ENCODE measurements at regions of chrX and their contacts with region 1.

Region 1: GRCh38 chrX:37976153-37976552 is 30.2 kb upstream of the SYTL5 start:
- DNase-seq: no peak
- H3K4me3 ChIP-seq: no peak overlapping the region
- H3K4me3 Mint-ChIP-seq: no peak overlapping the region
- H3K27ac Mint-ChIP-seq: no peak overlapping the region
- H3K4me1 ChIP-seq: peaks cover 11% of the 10 kb centered on the region; the same call in 1 of the 2 replicates
- H3K4me1 Mint-ChIP-seq: peaks cover 18% of the 10 kb centered on the region
- H3K27me3 ChIP-seq: no peaks in the 10 kb centered on the region
- H3K27me3 Mint-ChIP-seq: no peaks in the 10 kb centered on the region
- CTCF ChIP-seq: no peak

Region 2: GRCh38 chrX:37677765-37678164 is 298.4 kb before region 1 on chrX:
- CTCF ChIA-PET with region 1: no interaction called
- POLR2A ChIA-PET with region 1: no interaction called
- intact Hi-C with region 1: no loop called
- DNase-seq: no peak
- H3K4me3 ChIP-seq: no peak overlapping the region
- H3K4me3 Mint-ChIP-seq: no peak overlapping the region
- H3K27ac Mint-ChIP-seq: no peak overlapping the region
- H3K4me1 ChIP-seq: no peaks in the 10 kb centered on the region
- H3K4me1 Mint-ChIP-seq: peaks cover 12% of the 10 kb centered on the region
- H3K27me3 ChIP-seq: no peaks in the 10 kb centered on the region
- H3K27me3 Mint-ChIP-seq: no peaks in the 10 kb centered on the region
- CTCF ChIP-seq: no peak

Region 3: DNA sequence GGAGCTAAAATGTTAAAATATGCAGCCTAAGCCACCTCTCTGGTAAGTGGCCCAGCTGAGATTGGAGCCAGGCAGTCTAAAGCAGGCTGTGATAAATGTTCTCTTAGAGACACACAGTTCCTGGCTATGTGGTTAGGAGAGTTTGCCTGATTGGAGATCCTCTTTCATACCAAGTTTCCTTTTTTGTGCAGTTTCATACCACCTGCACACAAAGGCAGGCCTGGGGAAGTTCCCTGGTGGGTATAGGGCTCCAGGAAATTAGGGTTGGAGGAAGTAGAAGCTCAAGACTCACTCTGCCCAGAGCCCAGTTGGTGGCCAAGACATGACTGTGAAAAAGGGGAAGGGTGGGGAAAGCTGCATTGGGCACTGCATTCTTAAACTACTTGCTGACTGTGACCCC is 179.3 kb before region 1 on chrX:
- CTCF ChIA-PET with region 1: no interaction called
- POLR2A ChIA-PET with region 1: no interaction called
- intact Hi-C with region 1: no loop called
- DNase-seq: no peak
- H3K4me3 ChIP-seq: no peak overlapping the region
- H3K4me3 Mint-ChIP-seq: no peak overlapping the region
- H3K27ac Mint-ChIP-seq: no peak overlapping the region
- H3K4me1 ChIP-seq: no peaks in the 10 kb centered on the region
- H3K4me1 Mint-ChIP-seq: no peaks in the 10 kb centered on the region
- H3K27me3 ChIP-seq: no peaks in the 10 kb centered on the region
- H3K27me3 Mint-ChIP-seq: no peaks in the 10 kb centered on the region
- CTCF ChIP-seq: no peak

Region 4: DNA sequence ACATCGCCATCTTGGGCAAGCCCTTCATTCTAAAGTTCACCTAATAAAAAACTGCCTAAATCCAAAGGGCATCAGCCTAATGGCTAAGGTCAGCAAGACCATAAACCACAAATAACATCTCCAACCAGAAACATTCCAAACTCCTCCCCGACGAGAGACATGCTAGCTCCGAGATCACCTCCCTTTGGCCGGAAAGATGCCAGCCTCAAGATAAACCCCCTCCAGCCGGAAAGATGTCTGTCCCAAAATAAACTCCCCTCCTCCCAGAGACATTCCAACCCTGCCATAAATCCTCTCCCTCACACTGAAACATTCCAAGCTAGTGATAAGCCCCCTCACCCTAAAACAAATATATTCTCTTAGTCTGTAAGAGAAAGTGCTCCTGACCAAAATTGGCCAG is 115.4 kb before region 1 on chrX:
- CTCF ChIA-PET with region 1: no interaction called
- POLR2A ChIA-PET with region 1: no interaction called
- intact Hi-C with region 1: no loop called
- DNase-seq: peak; percentile 69 to 86
- H3K4me3 ChIP-seq: no peak overlapping the region
- H3K4me3 Mint-ChIP-seq: peak overlapping the region; percentile 44
- H3K27ac Mint-ChIP-seq: peak overlapping the region; percentile 54
- H3K4me1 ChIP-seq: peaks cover 46% of the 10 kb centered on the region
- H3K4me1 Mint-ChIP-seq: peaks cover 22% of the 10 kb centered on the region
- H3K27me3 ChIP-seq: no peaks in the 10 kb centered on the region
- H3K27me3 Mint-ChIP-seq: no peaks in the 10 kb centered on the region
- CTCF ChIP-seq: no peak

Region 5: DNA sequence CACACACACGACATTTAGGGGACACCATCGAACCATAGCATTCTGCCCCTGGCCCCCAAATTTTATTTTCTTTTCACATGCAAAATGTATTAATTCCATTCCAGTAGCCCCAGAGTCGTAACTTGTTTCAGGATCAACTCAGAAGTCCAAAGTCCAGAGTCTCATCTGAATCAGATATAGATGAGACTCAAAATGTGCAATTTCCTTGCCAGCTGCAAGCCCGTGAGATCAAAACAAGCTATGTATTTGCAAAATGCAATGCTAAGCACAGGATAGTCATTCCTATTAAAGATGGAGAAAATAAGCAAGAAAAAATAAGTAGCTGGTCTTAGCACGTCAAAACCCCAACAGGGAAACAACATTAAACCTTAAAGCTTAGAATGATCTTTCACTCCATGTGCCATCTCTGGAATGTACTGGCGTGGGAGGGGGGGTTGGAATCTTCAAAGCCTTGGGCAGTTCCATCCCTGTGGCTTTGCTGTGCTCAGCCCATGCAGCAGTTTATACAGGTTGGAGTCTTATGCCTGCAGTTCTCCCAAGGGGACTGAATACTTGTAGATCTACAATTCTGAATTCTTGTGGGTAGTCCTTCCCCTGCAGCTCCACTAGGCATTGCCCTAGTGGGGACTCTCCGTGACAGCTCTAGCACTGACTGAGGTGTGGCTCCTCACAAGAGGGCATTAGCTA is 17.5 kb before region 1 on chrX:
- CTCF ChIA-PET with region 1: no interaction called
- POLR2A ChIA-PET with region 1: no interaction called
- intact Hi-C with region 1: loop called (anchors 2 kb)
- DNase-seq: peak; percentile 46 to 60
- H3K4me3 ChIP-seq: no peak overlapping the region
- H3K4me3 Mint-ChIP-seq: peak overlapping the region; percentile 52
- H3K27ac Mint-ChIP-seq: peak overlapping the region; percentile 66
- H3K4me1 ChIP-seq: peaks cover 21% of the 10 kb centered on the region
- H3K4me1 Mint-ChIP-seq: peaks cover 22% of the 10 kb centered on the region
- H3K27me3 ChIP-seq: no peaks in the 10 kb centered on the region
- H3K27me3 Mint-ChIP-seq: no peaks in the 10 kb centered on the region
- CTCF ChIP-seq: no peak

Region 6: GRCh38 chrX:38006291-38006690 is 30.1 kb after region 1 on chrX and contains the start of gene SYTL5:
- CTCF ChIA-PET with region 1: no interaction called
- POLR2A ChIA-PET with region 1: no interaction called
- intact Hi-C with region 1: loop called (anchors 5 kb)
- DNase-seq: peak in 1 of 2 experiments; percentile 53
- H3K4me3 ChIP-seq: peak within 1 kb of the TSS; percentile 25
- H3K4me3 Mint-ChIP-seq: peak within 1 kb of the TSS; percentile 74
- H3K27ac Mint-ChIP-seq: peak within 1 kb of the TSS; percentile 90
- H3K4me1 ChIP-seq: peaks cover 33% of the 10 kb centered on the region
- H3K4me1 Mint-ChIP-seq: peaks cover 19% of the 10 kb centered on the region
- H3K27me3 ChIP-seq: no peaks in the 10 kb centered on the region
- H3K27me3 Mint-ChIP-seq: no peaks in the 10 kb centered on the region
- CTCF ChIP-seq: no peak
- total RNA-seq, gene SYTL5: 8.8 and 8.9 TPM in 2 replicates

Region 7: GRCh38 chrX:38275615-38276014 is 299.5 kb after region 1 on chrX:
- CTCF ChIA-PET with region 1: no interaction called
- POLR2A ChIA-PET with region 1: no interaction called
- intact Hi-C with region 1: no loop called
- DNase-seq: no peak
- H3K4me3 ChIP-seq: no peak overlapping the region
- H3K4me3 Mint-ChIP-seq: no peak overlapping the region
- H3K27ac Mint-ChIP-seq: no peak overlapping the region
- H3K4me1 ChIP-seq: peaks cover 26% of the 10 kb centered on the region
- H3K4me1 Mint-ChIP-seq: peaks cover 15% of the 10 kb centered on the region
- H3K27me3 ChIP-seq: no peaks in the 10 kb centered on the region
- H3K27me3 Mint-ChIP-seq: no peaks in the 10 kb centered on the region
- CTCF ChIP-seq: no peak